Activated CD4-positive, alpha-beta memory T cell treated with anti-CD3 and anti-CD28 coated beads for 36 hours (primary cell): ENCODE measurements at regions of chr10 and their contacts with region 1.

Region 1: GRCh38 chr10:28545967-28546644 is 13.2 kb downstream of the WAC start:
- DNase-seq: no peak
- H3K4me3 Mint-ChIP-seq: no peak overlapping the region
- H3K27ac Mint-ChIP-seq: peak overlapping the region; percentile 4
- H3K4me1 Mint-ChIP-seq: peaks cover 70% of the 10 kb centered on the region
- H3K27me3 Mint-ChIP-seq: no peaks in the 10 kb centered on the region

Region 2: GRCh38 chr10:28459453-28460144 is 86.5 kb before region 1 on chr10:
- CTCF ChIA-PET with region 1: no interaction called
- POLR2A ChIA-PET with region 1: no interaction called
- intact Hi-C with region 1: no loop called
- DNase-seq: no peak
- H3K4me3 Mint-ChIP-seq: no peak overlapping the region
- H3K27ac Mint-ChIP-seq: no peak overlapping the region
- H3K4me1 Mint-ChIP-seq: no peaks in the 10 kb centered on the region
- H3K27me3 Mint-ChIP-seq: peaks cover 16% of the 10 kb centered on the region

Region 3: GRCh38 chr10:28564905-28565304 is 18.8 kb after region 1 on chr10:
- CTCF ChIA-PET with region 1: no interaction called
- POLR2A ChIA-PET with region 1: interaction called, 4 read pairs
- intact Hi-C with region 1: loop called (anchors 2 kb)
- DNase-seq: no peak
- H3K4me3 Mint-ChIP-seq: no peak overlapping the region
- H3K27ac Mint-ChIP-seq: peak overlapping the region; percentile 20
- H3K4me1 Mint-ChIP-seq: peaks cover 80% of the 10 kb centered on the region
- H3K27me3 Mint-ChIP-seq: no peaks in the 10 kb centered on the region

Region 4: GRCh38 chr10:28580825-28581224 is 34.7 kb after region 1 on chr10:
- CTCF ChIA-PET with region 1: no interaction called
- POLR2A ChIA-PET with region 1: no interaction called
- intact Hi-C with region 1: loop called (anchors 5 kb)
- DNase-seq: no peak
- H3K4me3 Mint-ChIP-seq: no peak overlapping the region
- H3K27ac Mint-ChIP-seq: no peak overlapping the region
- H3K4me1 Mint-ChIP-seq: peaks cover 58% of the 10 kb centered on the region
- H3K27me3 Mint-ChIP-seq: no peaks in the 10 kb centered on the region

Region 5: DNA sequence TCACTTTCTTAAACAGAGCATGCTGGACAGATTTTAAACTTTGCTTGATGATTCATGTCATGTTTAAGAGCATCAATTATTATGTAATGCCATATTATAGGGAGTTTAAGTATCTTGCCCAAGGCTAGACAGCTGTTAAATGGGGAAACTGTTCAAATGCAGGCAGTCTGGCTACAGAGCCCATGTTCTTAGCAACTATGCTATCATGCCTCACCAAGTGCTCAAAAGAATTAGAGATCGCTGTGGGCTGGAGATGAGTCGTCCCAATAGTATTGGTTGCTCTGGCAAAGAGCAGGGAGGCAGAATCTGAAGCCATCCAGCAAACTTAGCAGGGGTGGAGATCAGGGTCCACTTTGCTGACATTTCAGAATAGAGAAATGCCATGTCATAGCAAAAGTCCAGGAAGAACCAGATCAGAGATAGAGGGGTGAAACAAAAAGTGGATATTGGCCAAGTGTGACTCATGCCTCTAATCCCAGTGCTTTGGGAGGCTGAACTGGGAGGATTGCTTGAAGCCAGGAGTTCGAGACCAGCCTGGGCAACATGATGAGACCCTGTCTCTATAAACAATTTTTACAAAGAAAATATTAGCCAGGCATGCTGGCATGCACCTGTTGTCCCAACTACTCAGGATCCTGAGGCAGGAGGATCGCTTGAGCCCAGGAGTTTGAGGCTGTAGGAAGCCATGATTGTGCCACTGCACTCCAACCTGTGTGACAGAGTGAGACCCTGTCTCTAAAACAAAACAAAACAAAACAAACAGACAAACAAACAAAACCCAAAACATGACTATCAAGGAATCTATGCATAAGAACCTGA is 189.0 kb after region 1 on chr10:
- CTCF ChIA-PET with region 1: no interaction called
- POLR2A ChIA-PET with region 1: no interaction called
- intact Hi-C with region 1: no loop called
- DNase-seq: no peak
- H3K4me3 Mint-ChIP-seq: no peak overlapping the region
- H3K27ac Mint-ChIP-seq: no peak overlapping the region
- H3K4me1 Mint-ChIP-seq: peaks cover 3% of the 10 kb centered on the region
- H3K27me3 Mint-ChIP-seq: peaks cover 8% of the 10 kb centered on the region